Dorsolateral prefrontal cortex (tissue), 120 donors: ENCODE measurements at regions of chr5 and their contacts with region 1.

Region 1: DNA sequence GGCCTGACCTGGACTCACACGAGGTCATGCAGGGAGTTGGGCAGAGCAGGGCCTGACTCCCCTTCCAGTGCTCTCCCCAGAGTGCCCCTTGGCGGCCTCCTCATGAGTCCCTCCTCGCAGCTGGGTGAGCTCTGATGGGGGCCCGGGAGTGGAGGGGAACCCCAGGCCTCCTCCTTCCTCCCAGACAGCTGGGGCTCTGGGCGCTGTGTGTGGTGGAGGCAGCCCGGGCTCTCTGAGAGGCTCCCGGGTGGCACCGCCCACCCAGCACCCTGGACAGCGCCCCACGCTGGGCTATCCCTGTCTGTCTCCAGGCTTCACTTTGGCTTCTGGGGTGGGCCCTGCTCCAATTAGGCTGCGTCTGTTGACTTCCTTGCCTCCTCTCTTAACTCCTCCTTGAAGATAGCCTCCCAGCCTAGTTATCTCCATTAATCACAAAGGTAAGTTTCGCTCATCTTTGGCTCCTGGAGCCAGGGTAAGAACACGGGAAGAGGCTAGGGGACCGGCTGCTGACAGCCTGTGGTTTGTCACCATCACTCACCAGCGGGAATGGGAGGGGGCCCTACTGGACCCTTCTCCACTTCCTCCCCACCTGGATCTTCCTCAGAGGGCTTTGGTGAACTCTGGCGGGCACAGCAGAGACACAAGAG is 13.0 kb downstream of the PSD2 start:
- DNase-seq: peak in 1 of 10 donors; percentile 34
- H3K4me3 ChIP-seq: peak overlapping the region in 1 of 59 donors; percentile 8
- H3K27ac ChIP-seq: peak overlapping the region in 36 of 59 donors; percentile 4 to 75 (median 48)
- H3K27me3 ChIP-seq: no peaks in the 10 kb centered on the region
- CTCF ChIP-seq: no peak

Region 2: GRCh38 chr5:139844472-139845145 is 36.0 kb after region 1 on chr5:
- intact Hi-C with region 1: loop called in 1 of 2 experiments (anchors 5 kb)
- DNase-seq: peak; percentile 44 to 91 (median 84)
- H3K4me3 ChIP-seq: no peak overlapping the region
- H3K27ac ChIP-seq: peak overlapping the region in 11 of 59 donors; percentile 9 to 63 (median 24)
- H3K27me3 ChIP-seq: no peaks in the 10 kb centered on the region
- CTCF ChIP-seq: peak; percentile 55 to 93 (median 83)

Region 3: GRCh38 chr5:139903795-139904565 is 95.4 kb after region 1 on chr5:
- intact Hi-C with region 1: no loop called
- DNase-seq: peak in 7 of 10 donors; percentile 26 to 75 (median 56)
- H3K4me3 ChIP-seq: peak overlapping the region; percentile 47 to 85 (median 71)
- H3K27ac ChIP-seq: peak overlapping the region in 54 of 59 donors; percentile 7 to 89 (median 69)
- H3K27me3 ChIP-seq: no peaks in the 10 kb centered on the region
- CTCF ChIP-seq: peak in 13 of 56 donors; percentile 4 to 38 (median 21)